ENCODE measurements at regions of chr6 and their contacts with region 1.

Region 1: DNA sequence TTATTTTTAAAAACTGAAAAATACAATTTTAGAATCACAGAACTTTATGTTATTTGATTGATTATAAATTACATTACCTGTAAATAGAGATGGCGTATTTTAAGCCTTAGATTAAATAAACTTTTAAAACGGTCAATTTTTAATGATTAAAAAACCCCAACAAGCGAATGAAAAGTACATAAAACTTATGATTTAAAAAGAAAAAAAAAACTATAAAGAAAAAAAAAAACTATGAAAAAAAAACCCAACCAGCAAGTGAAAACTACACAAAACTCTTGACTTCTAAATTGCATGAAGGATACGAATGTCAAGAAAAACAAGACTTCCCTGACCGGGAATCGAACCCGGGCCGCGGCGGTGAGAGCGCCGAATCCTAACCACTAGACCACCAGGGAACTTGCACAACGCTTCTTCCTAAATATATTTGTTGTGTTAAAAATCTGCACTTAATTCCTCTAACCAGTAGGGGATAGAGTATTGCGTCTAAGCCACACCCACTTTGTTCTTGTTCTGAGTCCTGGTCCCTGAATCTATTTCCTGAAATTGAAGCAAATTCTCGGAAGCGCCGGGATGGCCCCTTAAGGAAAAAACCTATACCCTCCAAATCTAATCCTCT is 10.7 kb upstream of the NCOA7 start:
- DNase-seq: peak; percentile 83
- ATAC-seq: peak; percentile 91
- H3K4me3 ChIP-seq: peak overlapping the region; percentile 39 to 51
- H3K27ac ChIP-seq: peak overlapping the region; percentile 24; the same call in 1 of the 2 replicates
- H3K4me1 ChIP-seq: peaks cover 0 to 14% of the 10 kb centered on the region in 2 experiments; a peak in 3 of 4 replicates
- H3K27me3 ChIP-seq: no peaks in the 10 kb centered on the region
- CTCF ChIP-seq: peak in 1 of 3 experiments; percentile 4; a peak in 1 of 6 replicates
- POLR2A ChIP-seq: no peak
- RAD21 ChIP-seq: no peak

Region 2: DNA sequence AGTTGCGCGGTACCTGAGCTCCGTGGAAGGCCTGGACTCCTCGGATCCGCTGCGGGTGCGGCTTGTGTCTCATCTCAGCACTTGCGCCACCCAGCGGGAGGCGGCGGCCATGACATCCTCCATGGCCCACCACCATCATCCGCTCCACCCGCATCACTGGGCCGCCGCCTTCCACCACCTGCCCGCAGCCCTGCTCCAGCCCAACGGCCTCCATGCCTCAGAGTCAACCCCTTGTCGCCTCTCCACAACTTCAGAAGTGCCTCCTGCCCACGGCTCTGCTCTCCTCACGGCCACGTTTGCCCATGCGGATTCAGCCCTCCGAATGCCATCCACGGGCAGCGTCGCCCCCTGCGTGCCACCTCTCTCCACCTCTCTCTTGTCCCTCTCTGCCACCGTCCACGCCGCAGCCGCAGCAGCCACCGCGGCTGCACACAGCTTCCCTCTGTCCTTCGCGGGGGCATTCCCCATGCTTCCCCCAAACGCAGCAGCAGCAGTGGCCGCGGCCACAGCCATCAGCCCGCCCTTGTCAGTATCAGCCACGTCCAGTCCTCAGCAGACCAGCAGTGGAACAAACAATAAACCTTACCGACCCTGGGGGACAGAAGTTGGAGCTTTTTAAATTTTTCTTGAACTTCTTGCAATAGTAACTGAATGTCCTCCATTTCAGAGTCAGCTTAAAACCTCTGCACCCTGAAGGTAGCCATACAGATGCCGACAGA is 20.7 kb before region 1 on chr6:
- CTCF ChIA-PET with region 1: no interaction called
- POLR2A ChIA-PET with region 1: no interaction called
- RAD21 ChIA-PET with region 1: no interaction called
- intact Hi-C with region 1: no loop called
- DNase-seq: peak; percentile 33
- ATAC-seq: peak; percentile 97
- H3K4me3 ChIP-seq: no peak overlapping the region
- H3K27ac ChIP-seq: no peak overlapping the region
- H3K4me1 ChIP-seq: peaks cover 0 to 6% of the 10 kb centered on the region in 2 experiments; a peak in 1 of 4 replicates
- H3K27me3 ChIP-seq: peaks cover 55% of the 10 kb centered on the region
- CTCF ChIP-seq: peak; percentile 53 to 85 (median 75); a peak in 5 of 6 replicates
- POLR2A ChIP-seq: no peak
- RAD21 ChIP-seq: peak; percentile 48

Region 3: DNA sequence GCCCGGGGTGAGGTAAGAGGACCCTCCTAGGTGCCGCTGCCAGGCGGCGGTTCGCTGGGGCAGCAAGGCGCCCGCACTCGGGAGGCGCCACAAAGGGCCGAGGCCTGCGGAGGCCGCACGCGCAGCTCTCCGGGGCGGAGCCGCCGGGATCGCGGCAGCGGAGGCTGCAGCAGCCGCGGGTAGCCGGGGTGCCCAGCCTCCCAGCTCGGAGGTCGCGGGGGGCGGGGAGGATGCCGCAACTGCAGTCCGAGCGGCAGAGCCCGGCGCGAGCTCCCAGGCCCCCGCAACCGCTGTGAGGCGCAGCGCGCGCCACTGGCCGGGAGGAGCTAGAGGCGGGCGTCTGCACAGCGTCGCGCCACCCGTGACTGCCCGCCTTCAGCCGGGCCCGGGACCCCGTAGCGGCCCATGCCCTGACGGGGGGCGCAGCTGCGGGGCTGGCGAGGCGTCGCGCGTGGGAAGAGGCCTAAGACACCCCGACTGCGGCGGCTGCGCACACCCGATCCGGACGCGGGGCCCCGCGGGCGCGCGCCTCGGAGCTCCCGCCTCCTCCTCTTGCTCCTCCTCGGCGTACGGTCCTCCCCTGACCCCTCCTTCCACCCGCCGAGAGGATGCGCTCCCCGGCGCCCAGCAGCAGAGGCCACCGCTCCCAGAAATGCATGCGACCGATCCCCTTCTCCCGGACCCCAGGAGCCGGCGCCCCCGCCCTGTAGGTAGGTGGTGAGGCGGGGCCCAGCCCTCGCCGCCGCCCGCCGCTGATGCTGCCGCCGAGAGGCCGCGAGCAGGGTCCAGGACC is 10.5 kb after region 1 on chr6 and contains the start of gene NCOA7:
- CTCF ChIA-PET with region 1: interaction called, 19 read pairs
- POLR2A ChIA-PET with region 1: interaction called, 25 read pairs
- RAD21 ChIA-PET with region 1: no interaction called
- intact Hi-C with region 1: no loop called
- DNase-seq: no peak
- ATAC-seq: peak; percentile 89
- H3K4me3 ChIP-seq: peak within 1 kb of the TSS; percentile 78 to 80
- H3K27ac ChIP-seq: peak within 1 kb of the TSS; percentile 75
- H3K4me1 ChIP-seq: peaks cover 20 to 25% of the 10 kb centered on the region in 2 experiments; a peak in 3 of 4 replicates
- H3K27me3 ChIP-seq: no peaks in the 10 kb centered on the region
- CTCF ChIP-seq: no peak
- POLR2A ChIP-seq: peak; percentile 52
- RAD21 ChIP-seq: no peak
- total RNA-seq, gene NCOA7: 13.8 TPM

Region 4: GRCh38 chr6:125974214-125974866 is 194.3 kb after region 1 on chr6:
- CTCF ChIA-PET with region 1: interaction called, 11 read pairs
- POLR2A ChIA-PET with region 1: no interaction called
- RAD21 ChIA-PET with region 1: interaction called in 1 of 2 experiments, 3 read pairs
- intact Hi-C with region 1: no loop called
- DNase-seq: peak; percentile 46
- ATAC-seq: peak; percentile 77
- H3K4me3 ChIP-seq: no peak overlapping the region
- H3K27ac ChIP-seq: no peak overlapping the region
- H3K4me1 ChIP-seq: no peaks in the 10 kb centered on the region
- H3K27me3 ChIP-seq: no peaks in the 10 kb centered on the region
- CTCF ChIP-seq: peak; percentile 35 to 67 (median 52); a peak in 5 of 6 replicates
- POLR2A ChIP-seq: no peak
- RAD21 ChIP-seq: peak; percentile 71

Region 5: DNA sequence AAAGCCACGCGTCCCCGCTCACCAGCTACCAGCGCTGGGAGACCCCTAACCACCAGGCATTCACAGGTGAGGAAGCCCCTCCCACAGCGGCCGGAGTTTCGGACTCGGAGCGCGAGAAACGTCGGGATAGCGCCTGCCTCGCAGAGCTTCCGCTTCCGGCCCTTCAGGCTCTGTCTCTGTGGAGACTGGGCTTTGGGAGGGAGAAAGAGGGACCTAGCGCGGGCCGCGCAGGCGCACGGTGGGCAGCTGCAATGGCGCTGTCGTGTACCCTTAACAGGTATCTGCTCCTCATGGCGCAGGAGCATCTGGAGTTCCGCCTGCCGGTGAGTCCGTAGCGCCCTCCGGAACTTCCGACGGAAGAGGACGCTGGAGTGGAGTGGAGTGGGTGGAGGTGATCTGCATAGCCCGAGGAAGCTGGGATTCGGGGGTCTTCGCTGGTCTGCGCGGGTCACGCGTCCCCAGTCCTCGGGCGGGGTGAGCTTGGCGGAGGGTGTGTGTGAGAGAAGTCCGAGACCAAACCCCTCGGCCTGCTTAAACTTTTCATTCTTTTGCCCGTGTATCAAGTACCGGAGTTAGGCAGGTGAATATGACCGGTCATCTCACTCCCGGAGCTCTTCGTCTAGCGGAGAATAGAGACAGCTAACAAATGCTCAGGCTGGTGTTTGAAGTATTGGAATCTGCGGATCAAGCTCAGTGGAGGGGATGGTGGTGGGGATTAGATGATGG is 206.4 kb after region 1 on chr6 and contains the start of gene TRMT11:
- CTCF ChIA-PET with region 1: no interaction called
- POLR2A ChIA-PET with region 1: interaction called, 3 read pairs
- RAD21 ChIA-PET with region 1: no interaction called
- intact Hi-C with region 1: loop called (anchors 2 kb)
- DNase-seq: peak; percentile 84
- ATAC-seq: peak; percentile 96
- H3K4me3 ChIP-seq: peak within 1 kb of the TSS; percentile 77 to 90
- H3K27ac ChIP-seq: peak within 1 kb of the TSS; percentile 81
- H3K4me1 ChIP-seq: peaks cover 7 to 39% of the 10 kb centered on the region in 2 experiments
- H3K27me3 ChIP-seq: no peaks in the 10 kb centered on the region
- CTCF ChIP-seq: 0 out of 6 replicates have a peak, but pooled peaks of 1 of the 3 experiments have one; percentile 9
- POLR2A ChIP-seq: peak; percentile 91
- RAD21 ChIP-seq: no peak
- total RNA-seq, gene TRMT11: 41.8 TPM

Region 6: DNA sequence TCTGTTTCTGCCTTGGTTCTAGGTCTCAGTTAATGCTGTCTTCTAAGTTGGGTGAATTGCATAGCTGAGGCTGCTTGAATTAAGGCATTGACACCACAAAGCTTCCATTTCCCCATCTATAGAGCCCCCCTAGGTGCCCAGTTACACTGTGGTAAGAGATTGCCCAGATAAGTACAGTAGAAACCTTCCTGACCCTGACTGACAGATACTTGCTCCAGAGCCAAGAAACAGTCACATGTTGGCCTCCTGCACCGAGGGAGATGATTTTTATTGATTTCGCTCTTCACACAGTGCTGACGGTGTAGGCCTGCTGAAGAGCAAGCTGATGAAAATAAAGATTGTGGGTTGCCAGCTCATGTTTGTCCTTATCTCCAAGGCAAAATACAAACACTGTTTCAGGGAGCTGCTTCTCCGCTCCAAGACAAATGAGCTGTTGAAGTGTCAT is 274.2 kb after region 1 on chr6:
- CTCF ChIA-PET with region 1: no interaction called
- POLR2A ChIA-PET with region 1: no interaction called
- RAD21 ChIA-PET with region 1: no interaction called
- intact Hi-C with region 1: no loop called
- DNase-seq: no peak
- ATAC-seq: no peak
- H3K4me3 ChIP-seq: no peak overlapping the region
- H3K27ac ChIP-seq: no peak overlapping the region
- H3K4me1 ChIP-seq: no peaks in the 10 kb centered on the region
- H3K27me3 ChIP-seq: no peaks in the 10 kb centered on the region
- CTCF ChIP-seq: no peak
- POLR2A ChIP-seq: no peak
- RAD21 ChIP-seq: no peak

Region 7: GRCh38 chr6:126170978-126171382 is 390.9 kb after region 1 on chr6:
- CTCF ChIA-PET with region 1: no interaction called
- POLR2A ChIA-PET with region 1: no interaction called
- RAD21 ChIA-PET with region 1: no interaction called
- intact Hi-C with region 1: loop called (anchors 10 kb)
- DNase-seq: no peak
- ATAC-seq: peak; percentile 78
- H3K4me3 ChIP-seq: no peak overlapping the region
- H3K27ac ChIP-seq: no peak overlapping the region
- H3K4me1 ChIP-seq: no peaks in the 10 kb centered on the region
- H3K27me3 ChIP-seq: no peaks in the 10 kb centered on the region
- CTCF ChIP-seq: peak; percentile 27 to 78 (median 59); a peak in 5 of 6 replicates
- POLR2A ChIP-seq: no peak
- RAD21 ChIP-seq: peak; percentile 39

Measured in HCT116 (cell line).